ENCODE measurements at regions of chr3 and their contacts with region 1.

Region 1: GRCh38 chr3:33787328-33788009 is 11.0 kb upstream of the PDCD6IP start:
- DNase-seq: peak; percentile 62
- H3K4me3 ChIP-seq: no peak overlapping the region
- H3K27ac ChIP-seq: no peak overlapping the region
- H3K4me1 ChIP-seq: no peaks in the 10 kb centered on the region
- H3K27me3 ChIP-seq: no peaks in the 10 kb centered on the region
- CTCF ChIP-seq: peak; percentile 10 to 70 (median 29)
- POLR2A ChIP-seq: no peak

Region 2: GRCh38 chr3:33186524-33187367 is 600.7 kb before region 1 on chr3:
- intact Hi-C with region 1: no loop called
- DNase-seq: no peak
- H3K4me3 ChIP-seq: no peak overlapping the region
- H3K27ac ChIP-seq: no peak overlapping the region
- H3K4me1 ChIP-seq: no peaks in the 10 kb centered on the region
- H3K27me3 ChIP-seq: no peaks in the 10 kb centered on the region
- CTCF ChIP-seq: no peak
- POLR2A ChIP-seq: no peak

Region 3: GRCh38 chr3:33636125-33636850 is 151.2 kb before region 1 on chr3:
- intact Hi-C with region 1: loop called (anchors 10 kb)
- DNase-seq: no peak
- H3K4me3 ChIP-seq: no peak overlapping the region
- H3K27ac ChIP-seq: no peak overlapping the region
- H3K4me1 ChIP-seq: no peaks in the 10 kb centered on the region
- H3K27me3 ChIP-seq: no peaks in the 10 kb centered on the region
- CTCF ChIP-seq: peak in 2 of 3 experiments; percentile 50 to 51
- POLR2A ChIP-seq: no peak